ENCODE measurements at regions of chr20 and their contacts with region 1.

Region 1: DNA sequence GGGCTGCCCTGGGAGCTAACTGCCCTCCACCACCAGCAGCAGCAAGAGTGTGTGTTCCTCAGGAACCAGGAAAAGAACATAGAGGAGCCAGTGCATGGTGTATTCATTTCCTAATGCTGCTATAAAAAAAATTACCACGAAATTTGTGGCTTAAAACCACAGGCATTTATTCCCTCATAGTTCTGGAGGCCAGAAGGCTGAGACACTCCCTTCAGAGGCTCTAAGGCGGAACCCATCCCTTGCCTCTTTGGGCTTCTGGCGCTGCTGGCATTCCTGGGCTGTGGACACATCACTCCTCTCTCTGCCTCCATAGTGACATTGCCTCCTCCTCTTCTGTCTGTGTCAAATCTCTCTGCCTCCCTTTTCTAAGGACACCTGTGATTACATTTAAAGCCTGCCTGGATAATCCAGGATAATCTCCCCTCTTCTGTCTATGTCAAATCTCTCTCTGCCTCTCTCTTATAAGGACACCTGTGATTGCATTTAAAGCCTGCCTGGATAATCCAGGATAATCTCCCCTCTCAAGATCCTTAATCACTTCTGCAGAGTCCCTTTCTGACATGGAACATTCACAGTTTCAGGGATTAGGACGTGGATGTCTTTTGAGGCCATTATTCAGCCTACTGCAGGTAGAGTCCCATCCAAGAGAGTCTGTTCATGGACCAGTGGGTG is 54.7 kb downstream of the NDUFAF5 start:
- DNase-seq: peak; percentile 61 to 75
- H3K4me3 ChIP-seq: no peak overlapping the region
- H3K27ac ChIP-seq: no peak overlapping the region
- H3K4me1 ChIP-seq: peaks cover 5% of the 10 kb centered on the region; the same call in 1 of the 2 replicates
- H3K27me3 ChIP-seq: peaks cover 21% of the 10 kb centered on the region
- CTCF ChIP-seq: no peak

Region 2: GRCh38 chr20:13336308-13337089 is 503.1 kb before region 1 on chr20:
- CTCF ChIA-PET with region 1: no interaction called
- POLR2A ChIA-PET with region 1: no interaction called
- intact Hi-C with region 1: no loop called
- DNase-seq: peak in 1 of 2 experiments; percentile 21
- H3K4me3 ChIP-seq: no peak overlapping the region
- H3K27ac ChIP-seq: no peak overlapping the region
- H3K4me1 ChIP-seq: peaks cover 5% of the 10 kb centered on the region; the same call in 1 of the 2 replicates
- H3K27me3 ChIP-seq: no peaks in the 10 kb centered on the region
- CTCF ChIP-seq: no peak

Region 3: GRCh38 chr20:13898011-13898612 is 58.6 kb after region 1 on chr20:
- CTCF ChIA-PET with region 1: no interaction called
- POLR2A ChIA-PET with region 1: interaction called, 39 read pairs
- intact Hi-C with region 1: no loop called
- DNase-seq: no peak
- H3K4me3 ChIP-seq: no peak overlapping the region
- H3K27ac ChIP-seq: no peak overlapping the region
- H3K4me1 ChIP-seq: no peaks in the 10 kb centered on the region
- H3K27me3 ChIP-seq: no peaks in the 10 kb centered on the region
- CTCF ChIP-seq: peak; percentile 45

Region 4: DNA sequence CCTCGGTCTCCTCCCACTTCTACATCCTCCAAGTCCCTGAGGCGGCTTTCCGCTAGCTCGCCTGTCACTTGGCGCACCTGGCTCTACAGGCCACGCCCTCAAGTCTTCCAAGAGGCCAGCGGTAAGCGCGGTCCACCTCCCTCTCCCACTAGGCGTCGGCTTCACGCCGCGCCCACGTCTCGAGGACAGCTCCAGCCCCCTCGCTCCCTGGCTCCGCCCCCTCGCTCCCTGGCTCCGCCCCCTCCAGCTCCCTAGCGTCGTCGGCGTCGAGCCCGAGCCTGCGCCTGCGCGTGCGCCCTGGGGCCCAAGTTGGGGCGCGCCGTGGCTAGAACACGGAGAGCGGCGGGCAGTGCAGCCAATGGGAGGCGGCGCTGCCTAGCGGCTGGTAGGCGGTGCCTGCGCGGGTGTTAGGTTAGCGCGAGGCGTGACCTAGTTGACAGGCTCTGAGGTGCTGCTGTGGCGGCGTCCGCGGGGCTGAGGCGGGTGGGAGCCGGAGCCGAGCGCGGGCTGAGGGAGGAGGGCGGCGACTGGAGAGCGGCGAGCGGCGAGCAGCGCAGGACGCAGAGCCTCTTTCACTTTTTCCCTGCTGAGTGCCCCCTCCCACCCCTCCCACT is 155.6 kb after region 1 on chr20 and contains the start of gene MACROD2:
- CTCF ChIA-PET with region 1: no interaction called
- POLR2A ChIA-PET with region 1: no interaction called
- intact Hi-C with region 1: loop called (anchors 10 kb)
- DNase-seq: peak; percentile 91 to 99
- H3K4me3 ChIP-seq: peak within 1 kb of the TSS; percentile 66
- H3K27ac ChIP-seq: no peak within 1 kb of the TSS
- H3K4me1 ChIP-seq: peaks cover 10% of the 10 kb centered on the region
- H3K27me3 ChIP-seq: no peaks in the 10 kb centered on the region
- CTCF ChIP-seq: no peak
- total RNA-seq, gene MACROD2: 8.5 and 11.4 TPM in 2 replicates